ENCODE measurements at regions of chr3 and their contacts with region 1.

Region 1: DNA sequence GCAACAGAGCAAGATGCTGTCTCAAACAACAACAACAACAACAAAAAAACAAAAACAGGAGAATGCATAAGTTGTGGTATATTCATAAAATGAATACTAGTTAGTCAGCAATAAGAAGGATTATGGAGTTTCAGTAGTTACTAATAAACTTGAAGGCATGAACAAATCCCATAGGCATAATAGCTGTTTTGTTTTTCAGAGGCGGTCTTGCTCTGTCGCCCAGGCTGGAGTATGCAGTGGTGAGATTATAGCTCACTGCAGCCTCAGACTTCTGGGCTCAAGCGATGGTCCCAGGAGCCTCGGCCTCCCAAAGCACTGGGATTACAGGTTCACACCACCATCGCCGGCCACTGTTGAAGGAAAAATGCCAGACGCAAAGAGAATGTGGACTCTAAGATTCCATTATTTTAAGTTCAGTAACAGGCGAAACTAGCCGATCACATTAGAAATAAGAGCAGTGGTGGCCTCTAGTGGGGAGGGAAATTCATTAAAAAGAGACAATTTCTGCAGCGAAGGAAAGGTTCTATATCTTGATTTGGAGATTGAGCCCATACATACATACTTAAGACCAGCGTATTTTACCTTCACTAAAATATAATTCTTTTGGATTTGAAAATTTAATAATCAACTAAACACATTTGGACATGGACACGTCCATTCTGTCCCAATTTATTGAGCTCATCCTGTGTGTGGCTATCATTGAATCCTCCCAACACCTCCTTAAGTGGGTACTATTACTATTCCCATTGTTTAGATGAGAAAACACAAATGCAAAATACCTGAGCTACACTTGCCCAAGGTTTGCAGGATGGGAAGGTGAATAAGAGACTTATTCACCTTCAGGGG is 27.4 kb upstream of the HDAC11 start:
- DNase-seq: no peak
- ATAC-seq: no peak
- H3K4me3 Mint-ChIP-seq: peak overlapping the region; percentile 78
- H3K27ac Mint-ChIP-seq: peak overlapping the region; percentile 96
- H3K4me1 Mint-ChIP-seq: peaks cover 20% of the 10 kb centered on the region
- H3K27me3 Mint-ChIP-seq: no peaks in the 10 kb centered on the region
- CTCF ChIP-seq: no peak

Region 2: GRCh38 chr3:13282986-13283876 is 169.5 kb before region 1 on chr3:
- CTCF ChIA-PET with region 1: interaction called, 16 read pairs
- POLR2A ChIA-PET with region 1: no interaction called
- DNase-seq: peak; percentile 69
- ATAC-seq: peak; percentile 73
- H3K4me3 Mint-ChIP-seq: peak overlapping the region; percentile 73
- H3K27ac Mint-ChIP-seq: no peak overlapping the region
- H3K4me1 Mint-ChIP-seq: peaks cover 13% of the 10 kb centered on the region
- H3K27me3 Mint-ChIP-seq: peaks cover 31% of the 10 kb centered on the region
- CTCF ChIP-seq: no peak

Region 3: DNA sequence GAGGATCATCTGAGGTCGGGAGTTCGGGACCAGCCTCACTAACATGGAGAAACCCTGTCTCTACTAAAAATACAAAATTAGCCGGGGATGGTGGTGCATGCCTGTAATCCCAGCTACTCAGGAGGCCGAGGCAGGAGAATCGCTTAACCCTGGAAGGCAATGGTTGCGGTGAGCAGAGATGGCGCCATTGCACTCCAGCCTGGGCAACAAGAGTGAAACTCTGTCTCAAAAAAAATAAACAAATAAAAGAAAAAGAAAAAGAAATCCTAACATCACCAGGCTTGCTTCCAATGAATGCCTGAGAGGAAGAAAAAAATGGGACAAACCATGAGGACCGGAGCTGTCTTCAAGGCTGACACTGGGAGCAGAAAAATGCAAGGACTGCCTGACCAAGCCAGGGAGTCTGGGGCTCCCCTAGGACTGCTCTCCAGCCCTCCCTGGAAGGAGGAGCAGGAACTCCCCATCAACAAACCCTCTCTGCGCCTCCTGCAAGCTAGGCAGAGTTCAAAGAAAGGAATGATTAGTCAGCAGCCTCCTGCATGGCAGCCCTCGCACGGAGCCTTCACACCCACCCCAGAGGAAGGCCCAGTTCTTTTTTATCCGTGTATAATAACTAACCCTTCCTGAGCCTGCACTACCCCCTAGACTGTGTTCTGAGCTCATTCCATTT is 88.0 kb before region 1 on chr3:
- CTCF ChIA-PET with region 1: interaction called, 15 read pairs
- POLR2A ChIA-PET with region 1: no interaction called
- DNase-seq: no peak
- ATAC-seq: peak; percentile 46
- H3K4me3 Mint-ChIP-seq: no peak overlapping the region
- H3K27ac Mint-ChIP-seq: peak overlapping the region; percentile 99
- H3K4me1 Mint-ChIP-seq: peaks cover 25% of the 10 kb centered on the region
- H3K27me3 Mint-ChIP-seq: no peaks in the 10 kb centered on the region
- CTCF ChIP-seq: no peak

Region 4: DNA sequence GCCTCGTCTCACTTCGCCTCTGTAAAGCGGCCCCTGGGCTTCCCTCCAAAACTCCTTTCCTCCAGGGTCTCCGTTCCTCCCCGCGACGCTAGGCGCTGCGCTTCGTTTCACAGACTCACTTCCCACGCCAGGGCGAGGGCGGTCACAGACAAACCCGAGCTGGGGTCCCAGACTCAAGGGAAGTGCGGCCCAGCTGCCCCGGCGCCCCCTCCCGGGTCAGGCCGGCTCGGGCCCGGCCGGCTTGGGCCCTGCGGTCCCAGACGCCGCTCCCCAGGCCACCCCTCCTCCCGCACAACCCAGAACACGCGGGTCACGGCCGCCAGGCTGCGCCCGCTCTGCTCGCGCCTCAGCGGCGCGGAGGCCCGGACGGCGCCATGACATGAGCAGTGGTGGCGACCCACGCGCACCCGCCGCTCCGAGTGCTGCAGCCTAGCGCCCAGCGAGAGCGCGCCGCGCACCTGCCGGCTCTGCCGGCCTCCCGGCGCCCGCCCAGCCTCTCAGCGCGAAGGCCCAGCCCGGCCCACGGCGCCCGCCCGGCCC is 33.1 kb before region 1 on chr3:
- CTCF ChIA-PET with region 1: interaction called, 41 read pairs
- POLR2A ChIA-PET with region 1: interaction called, 5 read pairs
- DNase-seq: peak; percentile 44
- ATAC-seq: peak; percentile 23
- H3K4me3 Mint-ChIP-seq: peak overlapping the region; percentile 78
- H3K27ac Mint-ChIP-seq: no peak overlapping the region
- H3K4me1 Mint-ChIP-seq: peaks cover 40% of the 10 kb centered on the region
- H3K27me3 Mint-ChIP-seq: peaks cover 6% of the 10 kb centered on the region
- CTCF ChIP-seq: no peak

Measured in WTC11 (cell line).